ENCODE measurements at regions of chr7 and their contacts with region 1.

Region 1: GRCh38 chr7:32891800-32892520 is 400 bp upstream of the KBTBD2 start:
- DNase-seq: peak; percentile 98 to 99
- ATAC-seq: peak; percentile 86 to 95 (median 94)
- H3K4me3 ChIP-seq: peak overlapping the region; percentile 15 to 84 (median 75)
- H3K27ac ChIP-seq: peak overlapping the region; percentile 93 to 99 (median 98)
- H3K4me1 ChIP-seq: peaks cover 0 to 56% (median 49%) of the 10 kb centered on the region in 9 donors
- H3K27me3 ChIP-seq: no peaks in the 10 kb centered on the region
- CTCF ChIP-seq: no peak

Region 2: GRCh38 chr7:32490127-32490822 is 401.7 kb before region 1 on chr7 and contains the start of gene LSM5:
- intact Hi-C with region 1: loop called in 3 of 10 experiments (anchors 5 kb)
- DNase-seq: peak; percentile 88 to 93
- ATAC-seq: peak; percentile 85 to 95 (median 91)
- H3K4me3 ChIP-seq: peak within 1 kb of the TSS; percentile 46 to 81 (median 70)
- H3K27ac ChIP-seq: peak within 1 kb of the TSS; percentile 43 to 95 (median 86)
- H3K4me1 ChIP-seq: peaks cover 0 to 30% (median 19%) of the 10 kb centered on the region in 9 donors
- H3K27me3 ChIP-seq: no peaks in the 10 kb centered on the region
- CTCF ChIP-seq: no peak
- total RNA-seq, gene LSM5: 36.1 to 49.8 (median 40.9) TPM

Region 3: DNA sequence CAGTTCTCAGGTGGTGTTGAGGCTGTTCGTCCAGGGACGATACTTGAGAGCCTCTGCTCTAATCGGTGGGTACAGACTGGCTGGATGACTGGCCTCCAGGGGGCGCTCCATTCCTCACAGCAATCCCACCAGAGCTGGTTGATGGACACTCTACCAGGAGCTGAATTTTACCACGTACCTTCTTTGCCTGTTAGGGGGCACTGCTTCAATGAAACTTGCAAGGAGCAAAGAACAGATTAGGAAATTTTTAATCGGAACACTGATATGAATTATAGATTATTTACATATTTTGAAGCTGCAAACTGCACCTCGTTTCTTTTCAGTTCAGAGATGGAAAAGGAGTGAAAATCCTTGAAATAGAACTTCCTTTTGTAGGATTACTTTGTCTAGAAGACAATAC is 45.3 kb before region 1 on chr7:
- intact Hi-C with region 1: loop called in 3 of 10 experiments (anchors 5 kb)
- DNase-seq: peak; percentile 81 to 91
- ATAC-seq: peak; percentile 96 to 100 (median 98)
- H3K4me3 ChIP-seq: peak overlapping the region in 4 of 10 donors; percentile 3 to 16 (median 10)
- H3K27ac ChIP-seq: no peak overlapping the region
- H3K4me1 ChIP-seq: peaks cover 0 to 10% (median 3%) of the 10 kb centered on the region in 9 donors
- H3K27me3 ChIP-seq: no peaks in the 10 kb centered on the region
- CTCF ChIP-seq: peak; percentile 57 to 96 (median 94)

Region 4: DNA sequence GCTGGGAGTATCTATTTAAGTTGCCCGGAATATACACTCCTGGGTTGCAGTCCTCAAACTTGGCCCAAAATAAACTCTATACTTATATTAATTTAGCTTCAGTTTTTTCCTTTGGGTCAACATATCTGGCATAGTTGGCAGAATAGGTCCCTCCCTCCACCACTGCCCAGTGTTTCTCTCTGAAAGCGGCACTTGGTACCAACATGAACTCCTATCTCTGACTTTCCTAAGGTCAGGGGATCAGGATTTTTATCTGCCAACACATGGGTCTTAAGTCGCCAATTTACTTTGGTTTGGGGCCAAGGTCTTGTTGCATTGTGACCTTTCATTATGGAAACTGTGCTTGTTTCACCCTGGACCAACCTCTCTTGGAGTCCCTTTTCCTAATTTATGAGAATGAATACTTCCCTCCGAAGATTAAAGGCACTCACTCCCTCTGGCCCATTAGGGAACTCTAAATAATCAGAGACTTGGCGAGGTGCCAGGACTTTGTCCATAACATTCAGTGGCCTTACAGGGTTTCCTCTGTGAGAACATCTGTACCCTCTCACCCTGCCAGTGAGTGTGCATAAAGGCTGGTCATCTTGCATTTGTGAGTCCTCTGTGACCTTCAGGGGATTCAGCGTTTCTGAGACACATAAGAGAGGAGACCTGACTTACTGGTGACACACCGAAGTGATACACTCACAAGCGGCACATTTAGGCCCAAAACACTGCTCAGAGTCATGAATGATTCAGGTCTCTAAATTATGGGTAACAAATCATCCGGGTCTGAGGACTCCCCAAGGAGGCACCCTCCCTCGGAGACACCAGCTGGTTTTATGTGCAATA is 45.6 kb after region 1 on chr7:
- intact Hi-C with region 1: loop called in 7 of 10 experiments (anchors 2 to 5 kb)
- DNase-seq: peak in 1 of 2 donors; percentile 70
- ATAC-seq: peak in 6 of 8 donors; percentile 41 to 80 (median 64)
- H3K4me3 ChIP-seq: no peak overlapping the region
- H3K27ac ChIP-seq: peak overlapping the region in 9 of 10 donors; percentile 14 to 74 (median 60)
- H3K4me1 ChIP-seq: peaks cover 0 to 64% (median 42%) of the 10 kb centered on the region in 9 donors
- H3K27me3 ChIP-seq: no peaks in the 10 kb centered on the region
- CTCF ChIP-seq: no peak

Region 5: GRCh38 chr7:32957326-32958045 is 65.5 kb after region 1 on chr7 and contains the start of gene FKBP9:
- intact Hi-C with region 1: loop called in 3 of 10 experiments (anchors 2 to 5 kb)
- DNase-seq: peak; percentile 84 to 95
- ATAC-seq: peak; percentile 94 to 97 (median 96)
- H3K4me3 ChIP-seq: peak within 1 kb of the TSS; percentile 75 to 99 (median 92)
- H3K27ac ChIP-seq: peak within 1 kb of the TSS; percentile 93 to 100 (median 98)
- H3K4me1 ChIP-seq: peaks cover 3 to 31% (median 19%) of the 10 kb centered on the region in 9 donors
- H3K27me3 ChIP-seq: peaks cover 0 to 3% (median 0%) of the 10 kb centered on the region in 7 donors
- CTCF ChIP-seq: no peak
- total RNA-seq, gene FKBP9: 103 to 158 (median 122) TPM

Region 6: GRCh38 chr7:33062782-33063443 is 171.0 kb after region 1 on chr7:
- intact Hi-C with region 1: loop called in 1 of 10 experiments (anchors 5 kb)
- DNase-seq: peak; percentile 93 to 95
- ATAC-seq: peak; percentile 99 to 100 (median 99)
- H3K4me3 ChIP-seq: peak overlapping the region; percentile 58 to 95 (median 83)
- H3K27ac ChIP-seq: peak overlapping the region; percentile 85 to 98 (median 94)
- H3K4me1 ChIP-seq: peaks cover 3 to 44% (median 23%) of the 10 kb centered on the region in 9 donors
- H3K27me3 ChIP-seq: no peaks in the 10 kb centered on the region
- CTCF ChIP-seq: no peak

Measured in heart right ventricle (tissue), 16 donors.